Activated CD4-positive, alpha-beta T cell treated with anti-CD3 and anti-CD28 coated beads for 36 hours (primary cell): ENCODE measurements at regions of chr5 and their contacts with region 1.

Region 1: DNA sequence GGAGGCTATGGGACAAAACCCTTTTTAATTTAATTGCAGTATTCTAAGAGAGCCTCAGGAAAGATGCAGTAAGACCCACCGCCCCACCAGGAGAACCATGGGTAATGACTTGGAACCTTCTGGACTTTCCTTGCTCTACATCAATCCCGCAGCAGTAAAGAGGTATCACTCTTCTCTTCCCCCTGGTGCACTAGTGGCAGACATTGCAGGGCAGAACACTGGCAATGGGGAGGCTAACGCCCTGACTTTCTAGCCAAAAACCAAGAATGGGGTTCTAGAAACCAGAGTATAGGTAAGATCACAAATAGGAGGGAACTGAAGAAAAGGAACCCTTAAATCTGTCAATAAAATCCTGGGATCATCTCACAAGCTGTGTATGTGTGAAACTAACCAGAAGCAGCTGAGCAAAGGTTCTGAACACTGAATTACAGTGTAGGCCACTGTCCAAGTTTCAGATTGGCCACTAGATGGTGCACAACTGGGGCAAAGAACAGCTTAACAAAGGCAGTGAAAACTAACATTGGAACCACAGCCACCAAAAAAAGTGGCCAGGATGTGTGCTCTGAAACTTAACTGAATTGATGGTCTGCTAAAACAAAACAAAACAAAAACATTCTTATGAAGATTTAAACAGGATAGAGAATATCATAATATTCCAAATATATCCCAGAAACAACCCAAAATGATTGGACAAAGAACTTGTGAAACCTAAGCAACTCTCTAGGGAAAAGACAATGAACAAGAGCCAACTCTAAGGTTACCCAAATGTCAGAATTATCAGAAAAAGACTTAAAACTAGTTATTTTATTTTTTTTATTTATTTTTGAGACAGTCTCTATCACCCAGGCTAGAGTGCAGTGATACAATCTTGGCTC is 6.6 kb upstream of the FAM151B start:
- DNase-seq: peak; percentile 60
- ATAC-seq: peak; percentile 84
- H3K4me3 Mint-ChIP-seq: no peak overlapping the region
- H3K27ac Mint-ChIP-seq: no peak overlapping the region
- H3K4me1 Mint-ChIP-seq: no peaks in the 10 kb centered on the region
- H3K27me3 Mint-ChIP-seq: no peaks in the 10 kb centered on the region

Region 2: GRCh38 chr5:79093762-79094161 is 1387.5 kb before region 1 on chr5:
- CTCF ChIA-PET with region 1: no interaction called
- POLR2A ChIA-PET with region 1: no interaction called
- intact Hi-C with region 1: no loop called
- DNase-seq: no peak
- ATAC-seq: no peak
- H3K4me3 Mint-ChIP-seq: no peak overlapping the region
- H3K27ac Mint-ChIP-seq: no peak overlapping the region
- H3K4me1 Mint-ChIP-seq: no peaks in the 10 kb centered on the region
- H3K27me3 Mint-ChIP-seq: peaks cover 8% of the 10 kb centered on the region

Region 3: DNA sequence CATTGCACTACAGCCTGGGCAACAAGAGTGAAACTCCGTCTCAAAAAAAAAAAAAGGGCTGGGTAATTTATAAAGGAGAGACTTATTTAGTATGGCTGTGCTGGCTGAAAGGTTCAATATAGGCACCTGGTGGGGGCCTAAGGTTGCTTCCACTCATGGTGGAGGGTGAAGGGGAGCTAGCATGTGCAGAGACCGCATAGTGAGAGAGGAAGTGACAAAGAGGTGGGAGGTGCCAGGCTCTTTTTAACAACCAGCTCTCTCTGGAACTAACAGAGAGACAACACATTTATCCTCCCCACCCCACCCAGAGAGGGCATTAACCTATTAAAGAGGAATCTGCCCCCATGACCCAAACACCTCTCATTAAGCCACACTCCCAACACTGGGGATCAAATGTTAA is 196.5 kb before region 1 on chr5:
- CTCF ChIA-PET with region 1: no interaction called
- POLR2A ChIA-PET with region 1: no interaction called
- intact Hi-C with region 1: no loop called
- DNase-seq: peak; percentile 49
- ATAC-seq: peak; percentile 81
- H3K4me3 Mint-ChIP-seq: no peak overlapping the region
- H3K27ac Mint-ChIP-seq: peak overlapping the region; percentile 45
- H3K4me1 Mint-ChIP-seq: peaks cover 18% of the 10 kb centered on the region
- H3K27me3 Mint-ChIP-seq: no peaks in the 10 kb centered on the region

Region 4: DNA sequence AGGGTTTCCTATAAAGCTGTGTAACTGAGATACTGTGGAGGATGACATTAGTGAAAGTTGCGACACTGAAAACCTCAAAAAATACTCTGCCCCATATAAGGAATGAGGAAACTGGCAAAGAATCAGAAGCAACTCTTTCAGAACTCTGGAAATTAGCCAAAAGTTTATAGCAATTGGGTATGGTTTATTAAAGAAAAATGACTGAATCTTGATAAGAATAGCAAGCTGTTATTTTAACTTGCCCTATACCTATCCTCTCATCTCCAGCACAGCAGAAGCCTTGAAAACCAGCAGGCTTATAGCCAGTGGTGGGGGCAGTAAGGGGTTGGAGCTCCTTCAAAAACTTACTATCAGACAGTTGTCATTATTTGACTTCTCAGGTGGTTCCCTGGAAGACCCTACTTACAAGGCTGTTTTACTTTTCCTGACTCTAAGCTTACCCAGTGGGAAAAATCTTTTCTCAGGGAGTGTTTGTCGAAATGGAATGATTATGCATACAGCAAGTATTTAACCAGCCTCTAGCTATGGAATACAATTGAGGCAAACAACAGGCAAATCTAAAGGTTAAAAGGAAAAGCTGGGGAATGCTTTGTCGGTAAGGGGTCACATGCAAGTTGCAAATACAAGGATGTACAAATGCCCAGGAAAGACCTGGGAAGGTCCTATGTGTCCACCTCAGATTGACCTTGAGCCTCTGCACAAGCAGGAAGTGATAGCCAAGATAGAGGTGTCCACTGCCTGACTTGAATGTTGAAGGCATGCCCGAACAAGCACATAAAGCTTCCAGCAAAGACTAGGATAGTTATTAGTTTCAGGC is 14.4 kb before region 1 on chr5:
- CTCF ChIA-PET with region 1: interaction called, 14 read pairs
- POLR2A ChIA-PET with region 1: no interaction called
- intact Hi-C with region 1: no loop called
- DNase-seq: no peak
- ATAC-seq: no peak
- H3K4me3 Mint-ChIP-seq: no peak overlapping the region
- H3K27ac Mint-ChIP-seq: no peak overlapping the region
- H3K4me1 Mint-ChIP-seq: no peaks in the 10 kb centered on the region
- H3K27me3 Mint-ChIP-seq: no peaks in the 10 kb centered on the region

Region 5: DNA sequence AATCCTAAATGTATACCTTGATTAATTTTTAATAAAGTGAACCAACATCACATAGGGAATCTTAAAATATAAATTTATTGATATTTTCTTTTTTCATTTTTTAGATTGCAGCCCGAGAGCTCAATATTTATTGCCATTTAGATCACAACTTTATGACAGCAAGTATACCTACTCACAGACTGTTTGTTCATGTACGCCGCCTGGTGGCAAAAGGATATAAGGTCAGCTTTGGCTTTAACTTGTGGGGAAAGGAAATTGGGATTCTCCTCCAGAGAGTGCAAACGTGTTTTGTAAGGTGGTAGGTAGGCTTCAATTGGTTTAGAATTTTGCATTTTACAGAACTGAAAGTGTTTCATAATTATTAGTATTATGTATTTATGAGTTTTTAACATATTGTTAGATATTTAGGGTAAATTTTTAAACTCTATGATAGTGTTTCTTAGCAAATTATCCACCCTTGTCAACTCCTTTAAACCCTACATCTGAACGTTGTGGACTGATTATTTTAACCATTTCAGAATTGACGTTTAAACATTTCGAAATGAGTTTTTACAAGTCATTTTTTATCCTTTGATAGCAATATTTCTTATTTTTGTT is 191.0 kb after region 1 on chr5:
- CTCF ChIA-PET with region 1: interaction called, 7 read pairs
- POLR2A ChIA-PET with region 1: no interaction called
- intact Hi-C with region 1: loop called (anchors 1 to 2 kb)
- DNase-seq: peak; percentile 84
- ATAC-seq: peak; percentile 81
- H3K4me3 Mint-ChIP-seq: no peak overlapping the region
- H3K27ac Mint-ChIP-seq: no peak overlapping the region
- H3K4me1 Mint-ChIP-seq: no peaks in the 10 kb centered on the region
- H3K27me3 Mint-ChIP-seq: no peaks in the 10 kb centered on the region

Region 6: GRCh38 chr5:80990990-80991389 is 509.7 kb after region 1 on chr5:
- CTCF ChIA-PET with region 1: no interaction called
- POLR2A ChIA-PET with region 1: no interaction called
- intact Hi-C with region 1: loop called in 1 of 2 experiments (anchors 5 kb)
- DNase-seq: no peak
- ATAC-seq: no peak
- H3K4me3 Mint-ChIP-seq: no peak overlapping the region
- H3K27ac Mint-ChIP-seq: no peak overlapping the region
- H3K4me1 Mint-ChIP-seq: peaks cover 66% of the 10 kb centered on the region
- H3K27me3 Mint-ChIP-seq: no peaks in the 10 kb centered on the region

Region 7: GRCh38 chr5:81165493-81166119 is 684.4 kb after region 1 on chr5:
- CTCF ChIA-PET with region 1: no interaction called
- POLR2A ChIA-PET with region 1: no interaction called
- intact Hi-C with region 1: loop called in 1 of 2 experiments (anchors 1 kb)
- DNase-seq: peak; percentile 84
- ATAC-seq: peak; percentile 87
- H3K4me3 Mint-ChIP-seq: no peak overlapping the region
- H3K27ac Mint-ChIP-seq: no peak overlapping the region
- H3K4me1 Mint-ChIP-seq: peaks cover 16% of the 10 kb centered on the region
- H3K27me3 Mint-ChIP-seq: no peaks in the 10 kb centered on the region